ENCODE measurements at regions of chr3 and their contacts with region 1.

Region 1: GRCh38 chr3:4571690-4572334 is 78.7 kb downstream of the ITPR1 start:
- DNase-seq: peak; percentile 26
- ATAC-seq: peak; percentile 33
- H3K4me3 ChIP-seq: no peak overlapping the region
- H3K4me3 Mint-ChIP-seq: no peak overlapping the region
- H3K27ac ChIP-seq: peak overlapping the region in 1 of 2 donors; percentile 39
- H3K27ac Mint-ChIP-seq: peak overlapping the region; percentile 23
- H3K4me1 ChIP-seq: peaks cover 0 to 11% of the 10 kb centered on the region in 2 donors
- H3K4me1 Mint-ChIP-seq: peaks cover 69% of the 10 kb centered on the region
- H3K27me3 ChIP-seq: no peaks in the 10 kb centered on the region
- H3K27me3 Mint-ChIP-seq: no peaks in the 10 kb centered on the region
- CTCF ChIP-seq: peak; percentile 36

Region 2: DNA sequence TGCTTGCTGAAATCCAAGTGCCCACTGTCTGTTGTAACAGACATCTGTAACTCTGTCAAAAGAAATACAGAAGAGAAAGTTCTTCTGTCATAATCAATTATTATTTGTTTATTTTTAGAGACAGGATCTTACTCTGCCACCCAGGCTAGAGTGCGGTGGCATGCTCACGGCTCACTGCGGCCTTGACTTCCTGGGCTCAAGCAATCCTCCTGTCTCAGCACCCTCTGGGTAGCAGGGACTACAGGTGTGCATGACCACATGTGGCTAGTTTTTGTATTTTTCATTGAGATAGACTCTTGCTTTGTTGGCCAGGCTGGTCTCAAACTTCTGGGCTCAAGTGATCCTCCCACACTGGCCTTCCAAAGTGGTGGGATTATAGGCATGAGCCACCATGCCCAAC is 446.2 kb before region 1 on chr3:
- CTCF ChIA-PET with region 1: no interaction called
- POLR2A ChIA-PET with region 1: no interaction called
- intact Hi-C with region 1: no loop called
- DNase-seq: no peak
- ATAC-seq: no peak
- H3K4me3 ChIP-seq: no peak overlapping the region
- H3K4me3 Mint-ChIP-seq: no peak overlapping the region
- H3K27ac ChIP-seq: no peak overlapping the region
- H3K27ac Mint-ChIP-seq: no peak overlapping the region
- H3K4me1 ChIP-seq: no peaks in the 10 kb centered on the region
- H3K4me1 Mint-ChIP-seq: no peaks in the 10 kb centered on the region
- H3K27me3 ChIP-seq: no peaks in the 10 kb centered on the region
- H3K27me3 Mint-ChIP-seq: peaks cover 3% of the 10 kb centered on the region
- CTCF ChIP-seq: no peak

Region 3: DNA sequence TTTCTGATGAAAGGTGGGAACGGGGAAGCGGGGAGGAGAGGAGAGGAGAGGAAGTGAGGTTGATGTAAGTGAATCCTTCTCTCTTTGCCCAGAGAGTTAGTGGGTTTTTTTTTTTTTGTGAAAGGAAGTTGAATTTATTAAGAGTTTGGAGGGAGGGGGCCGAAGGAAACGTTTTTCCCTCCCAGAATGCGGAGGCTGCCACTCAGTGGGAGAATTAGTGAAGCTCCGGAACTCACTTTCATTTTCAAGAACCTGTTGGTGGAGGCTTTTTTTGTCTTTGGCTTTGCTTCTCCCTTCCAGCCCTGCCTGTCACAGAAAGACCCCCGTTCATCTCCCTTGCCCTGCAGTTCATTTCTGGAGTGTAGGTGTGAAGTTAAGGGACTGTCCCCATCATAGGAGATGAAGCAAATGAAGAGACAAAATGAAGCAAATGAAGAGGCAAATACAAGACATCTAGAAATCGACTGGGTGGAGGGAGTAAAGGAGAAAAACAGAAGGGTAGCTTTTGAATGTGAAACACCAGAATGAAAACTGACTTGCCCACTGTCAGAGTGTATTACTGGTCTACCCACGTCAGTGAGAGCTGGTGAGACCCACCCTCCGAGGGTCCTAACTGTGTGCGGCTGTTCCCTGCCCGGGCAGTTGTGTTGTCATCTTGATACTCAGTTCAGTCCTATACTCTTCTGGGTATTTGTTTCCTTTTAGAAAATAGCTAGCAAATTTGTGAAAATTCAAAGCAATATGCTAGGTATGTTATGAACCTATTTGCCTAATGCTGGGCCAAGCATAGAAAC is 12.8 kb after region 1 on chr3:
- CTCF ChIA-PET with region 1: interaction called, 16 read pairs
- POLR2A ChIA-PET with region 1: no interaction called
- intact Hi-C with region 1: loop called (anchors 2 kb)
- DNase-seq: peak; percentile 23
- ATAC-seq: peak; percentile 43
- H3K4me3 ChIP-seq: peak overlapping the region in 4 of 5 experiments; percentile 0 to 31 (median 14)
- H3K4me3 Mint-ChIP-seq: peak overlapping the region; percentile 87
- H3K27ac ChIP-seq: peak overlapping the region; percentile 28 to 56
- H3K27ac Mint-ChIP-seq: peak overlapping the region; percentile 88
- H3K4me1 ChIP-seq: peaks cover 60 to 68% of the 10 kb centered on the region in 2 donors
- H3K4me1 Mint-ChIP-seq: peaks cover 88% of the 10 kb centered on the region
- H3K27me3 ChIP-seq: no peaks in the 10 kb centered on the region
- H3K27me3 Mint-ChIP-seq: no peaks in the 10 kb centered on the region
- CTCF ChIP-seq: no peak